CD4-positive, alpha-beta T cell (primary cell): ENCODE measurements at regions of chr7 and their contacts with region 1.

Region 1: DNA sequence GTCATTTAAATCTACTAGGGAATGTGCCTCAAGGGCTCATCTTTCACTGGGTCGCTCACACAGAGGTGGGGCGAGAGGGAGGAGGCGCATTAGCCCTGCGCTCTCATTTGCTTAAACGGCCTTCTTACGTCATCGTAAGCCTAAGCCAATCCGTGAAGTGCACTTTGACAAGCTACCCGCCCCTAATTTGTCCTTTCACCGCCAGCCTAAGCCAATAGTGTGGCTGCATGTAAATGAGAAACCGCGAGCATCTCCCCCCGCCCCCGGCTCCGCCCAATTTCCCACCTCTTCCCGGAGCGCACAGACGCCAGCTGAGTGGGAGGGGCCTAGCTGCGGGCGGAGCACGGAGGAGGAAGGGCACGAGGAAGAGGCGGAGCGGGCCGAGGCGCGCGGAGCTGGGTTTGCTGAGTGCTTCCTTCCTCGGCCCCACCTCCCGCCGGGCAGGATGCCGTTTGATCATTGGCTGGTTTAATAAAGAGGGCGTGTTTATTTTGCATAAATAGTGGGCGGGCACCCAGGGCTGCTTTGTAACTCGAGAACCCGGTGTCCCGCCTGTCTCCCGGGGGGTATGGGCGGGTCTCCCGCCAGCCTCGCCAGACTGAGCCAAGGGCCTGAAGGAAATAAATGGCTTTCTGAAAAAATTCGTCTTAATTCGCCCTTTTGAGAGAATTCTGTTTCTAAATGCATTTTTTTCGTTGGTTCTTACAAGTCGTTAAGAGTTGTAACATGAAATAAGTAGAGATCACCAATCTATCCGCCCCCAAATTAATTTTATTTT is 289.5 kb upstream of the NFE2L3 start:
- DNase-seq: peak; percentile 26 to 87 (median 51)
- ATAC-seq: peak; percentile 86
- H3K4me3 ChIP-seq: peak overlapping the region; percentile 13
- H3K4me3 Mint-ChIP-seq: peak overlapping the region; percentile 55
- H3K27ac ChIP-seq: no peak overlapping the region
- H3K27ac Mint-ChIP-seq: peak overlapping the region; percentile 78
- H3K4me1 ChIP-seq: peaks cover 20% of the 10 kb centered on the region
- H3K4me1 Mint-ChIP-seq: peaks cover 24% of the 10 kb centered on the region
- H3K27me3 ChIP-seq: peaks cover 66 to 98% of the 10 kb centered on the region in 2 experiments
- H3K27me3 Mint-ChIP-seq: peaks cover 30% of the 10 kb centered on the region
- CTCF ChIP-seq: no peak

Region 2: DNA sequence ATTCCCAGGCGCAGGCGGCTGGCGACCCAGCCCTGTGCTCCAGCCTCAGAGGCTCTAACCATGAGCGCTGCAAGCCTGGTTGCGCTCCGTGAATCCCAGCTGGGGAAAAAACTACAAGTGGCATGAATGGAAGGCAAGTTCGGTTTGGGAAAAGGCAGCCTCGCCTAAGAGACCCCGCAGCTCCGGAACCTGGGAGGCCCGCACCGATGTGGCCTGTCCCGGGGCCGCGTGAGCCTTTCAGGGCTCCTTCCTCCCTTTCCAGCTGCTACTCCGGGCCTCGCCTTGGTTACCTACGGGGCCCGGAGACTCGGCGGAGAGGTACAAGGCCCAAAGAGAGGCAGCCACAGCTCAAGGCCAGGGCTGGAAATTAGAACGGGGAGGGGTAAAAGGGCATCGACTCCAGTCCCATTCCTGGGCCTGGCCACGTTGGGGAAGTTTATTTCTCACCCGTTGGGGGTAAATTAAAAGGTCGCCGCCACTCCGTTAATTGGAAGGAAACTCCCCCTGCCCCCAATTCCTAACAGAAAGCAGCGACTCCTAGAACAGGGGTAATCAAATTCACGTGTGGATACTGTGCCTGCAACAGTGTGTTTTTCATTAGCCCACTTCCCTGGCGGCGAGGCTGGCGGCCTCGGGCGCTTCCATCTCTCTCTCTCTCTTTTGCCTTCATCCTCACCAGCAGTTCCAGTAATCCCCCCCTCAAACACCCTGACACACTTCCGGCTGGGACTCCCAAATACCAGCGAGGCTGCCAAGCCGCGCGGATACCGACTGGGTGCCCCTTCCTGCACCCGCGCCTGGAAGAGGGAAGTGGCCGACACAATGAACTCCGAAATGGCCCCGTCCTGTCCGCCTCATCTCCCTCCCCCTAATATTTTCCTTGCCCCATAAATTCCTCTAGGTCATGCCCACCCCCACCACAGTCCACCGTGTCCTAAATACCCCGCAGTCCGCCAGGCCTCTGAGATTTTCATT is 1304.4 kb after region 1 on chr7:
- CTCF ChIA-PET with region 1: no interaction called
- POLR2A ChIA-PET with region 1: interaction called, 3 read pairs
- intact Hi-C with region 1: loop called (anchors 2 kb)
- DNase-seq: peak in 3 of 14 experiments; percentile 2 to 30 (median 16)
- ATAC-seq: no peak
- H3K4me3 ChIP-seq: no peak overlapping the region
- H3K4me3 Mint-ChIP-seq: peak overlapping the region; percentile 83
- H3K27ac ChIP-seq: no peak overlapping the region
- H3K27ac Mint-ChIP-seq: peak overlapping the region; percentile 76
- H3K4me1 ChIP-seq: peaks cover 63% of the 10 kb centered on the region
- H3K4me1 Mint-ChIP-seq: peaks cover 49% of the 10 kb centered on the region
- H3K27me3 ChIP-seq: peaks cover 85 to 99% of the 10 kb centered on the region in 2 experiments
- H3K27me3 Mint-ChIP-seq: peaks cover 93% of the 10 kb centered on the region
- CTCF ChIP-seq: no peak